ENCODE measurements at regions of chr2 and their contacts with region 1.

Region 1: DNA sequence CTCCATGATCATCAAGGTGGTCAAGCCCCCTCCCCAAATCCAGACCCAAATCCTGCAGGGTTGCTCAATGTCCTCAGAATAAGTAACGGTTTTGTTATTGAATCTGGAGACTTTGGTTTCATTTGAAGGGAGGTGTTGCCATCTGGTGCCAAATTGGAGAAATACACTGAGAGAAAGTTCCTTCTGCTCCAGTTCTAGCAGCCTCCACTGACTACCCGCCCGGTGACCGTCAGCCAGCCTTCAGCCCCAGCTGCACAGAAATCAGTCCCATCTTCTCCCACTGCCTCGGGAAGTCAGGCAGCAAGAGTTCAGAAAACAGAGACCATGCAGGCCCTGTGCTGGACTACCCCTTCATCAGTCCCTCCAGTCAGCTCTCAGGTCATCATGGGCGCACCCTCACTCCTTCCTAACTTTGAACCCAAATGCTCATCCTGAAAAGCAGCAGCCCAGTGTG is 38.7 kb downstream of the PKDCC start:
- DNase-seq: no peak
- H3K4me3 ChIP-seq: no peak overlapping the region
- H3K27ac ChIP-seq: no peak overlapping the region
- H3K4me1 ChIP-seq: peaks cover 4% of the 10 kb centered on the region
- H3K27me3 ChIP-seq: no peaks in the 10 kb centered on the region
- CTCF ChIP-seq: peak; percentile 66 to 73 (median 67)

Region 2: GRCh38 chr2:41869542-41870264 is 216.8 kb before region 1 on chr2:
- dilution Hi-C with region 1: loop called (anchors 25 kb)
- DNase-seq: no peak
- H3K4me3 ChIP-seq: no peak overlapping the region
- H3K27ac ChIP-seq: no peak overlapping the region
- H3K4me1 ChIP-seq: no peaks in the 10 kb centered on the region
- H3K27me3 ChIP-seq: no peaks in the 10 kb centered on the region
- CTCF ChIP-seq: peak; percentile 71 to 89 (median 88)

Region 3: GRCh38 chr2:42547014-42547413 is 460.5 kb after region 1 on chr2:
- dilution Hi-C with region 1: no loop called
- DNase-seq: no peak
- H3K4me3 ChIP-seq: no peak overlapping the region
- H3K27ac ChIP-seq: no peak overlapping the region
- H3K4me1 ChIP-seq: no peaks in the 10 kb centered on the region
- H3K27me3 ChIP-seq: no peaks in the 10 kb centered on the region
- CTCF ChIP-seq: no peak

Measured in keratinocyte (primary cell).